Psoas muscle (tissue), 8 donors: ENCODE measurements at regions of chr2 and their contacts with region 1.

Region 1: GRCh38 chr2:43408407-43409160 is 182.2 kb upstream of the ZFP36L2 start:
- DNase-seq: no peak
- ATAC-seq: no peak
- H3K4me3 ChIP-seq: no peak overlapping the region
- H3K27ac ChIP-seq: no peak overlapping the region
- H3K4me1 ChIP-seq: peaks cover 45% of the 10 kb centered on the region
- H3K27me3 ChIP-seq: no peaks in the 10 kb centered on the region
- CTCF ChIP-seq: no peak

Region 2: GRCh38 chr2:43105586-43106558 is 302.7 kb before region 1 on chr2:
- intact Hi-C with region 1: no loop called
- DNase-seq: peak; percentile 51 to 69
- ATAC-seq: peak; percentile 23 to 33 (median 31)
- H3K4me3 ChIP-seq: no peak overlapping the region
- H3K27ac ChIP-seq: peak overlapping the region; percentile 31
- H3K4me1 ChIP-seq: peaks cover 5% of the 10 kb centered on the region
- H3K27me3 ChIP-seq: no peaks in the 10 kb centered on the region
- CTCF ChIP-seq: peak; percentile 13

Region 3: DNA sequence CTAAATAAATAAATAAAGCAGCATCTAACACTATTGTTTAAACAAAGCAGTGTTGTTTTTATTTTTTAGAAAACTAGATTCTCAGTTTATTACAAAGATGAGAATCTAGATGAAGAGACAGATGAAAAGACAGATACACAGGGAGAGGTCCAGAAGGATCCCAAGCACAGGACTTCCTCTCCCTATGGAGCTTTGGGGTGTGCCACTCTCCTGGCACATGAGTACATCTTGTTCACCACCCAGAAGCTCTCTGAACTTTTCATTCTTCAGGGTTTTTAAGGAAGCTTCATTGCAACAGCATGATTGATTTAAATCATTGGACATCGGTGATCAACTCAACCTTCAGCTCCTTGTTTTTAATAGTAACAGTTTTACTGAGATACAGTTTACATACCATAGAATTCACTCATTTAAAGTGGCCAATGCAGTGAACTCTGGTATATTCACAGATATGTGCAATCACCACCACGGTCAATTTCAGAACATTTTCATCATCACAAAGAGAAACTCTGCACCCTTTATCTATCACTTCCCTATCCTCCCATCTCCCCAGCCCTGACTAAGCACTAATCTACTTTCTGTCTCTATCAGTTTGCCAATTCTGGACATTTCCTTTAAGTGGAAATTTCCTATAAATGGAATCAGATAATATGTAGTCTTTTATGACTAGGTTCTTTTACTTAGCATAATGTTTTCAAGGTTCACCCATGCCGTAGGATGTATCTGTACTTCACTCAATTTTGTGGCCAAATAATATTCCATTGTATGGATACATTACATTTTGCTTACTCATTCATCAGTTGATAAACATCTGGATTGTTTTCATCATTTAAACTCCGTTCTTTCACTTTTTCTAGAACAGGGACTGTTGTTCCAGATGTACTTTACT is 119.9 kb before region 1 on chr2:
- intact Hi-C with region 1: loop called in 1 of 2 experiments (anchors 10 kb)
- DNase-seq: no peak
- ATAC-seq: no peak
- H3K4me3 ChIP-seq: no peak overlapping the region
- H3K27ac ChIP-seq: no peak overlapping the region
- H3K4me1 ChIP-seq: peaks cover 7% of the 10 kb centered on the region
- H3K27me3 ChIP-seq: no peaks in the 10 kb centered on the region
- CTCF ChIP-seq: no peak

Region 4: GRCh38 chr2:43676322-43677050 is 267.9 kb after region 1 on chr2 and contains the start of gene C1GALT1C1L:
- intact Hi-C with region 1: no loop called
- DNase-seq: peak; percentile 56 to 79
- ATAC-seq: peak; percentile 44 to 86 (median 67)
- H3K4me3 ChIP-seq: peak within 1 kb of the TSS; percentile 64
- H3K27ac ChIP-seq: no peak within 1 kb of the TSS
- H3K4me1 ChIP-seq: no peaks in the 10 kb centered on the region
- H3K27me3 ChIP-seq: no peaks in the 10 kb centered on the region
- CTCF ChIP-seq: no peak
- total RNA-seq, gene C1GALT1C1L: 0.23 to 0.56 (median 0.26) TPM in 3 of 4 donors, not detected in the other